Lower leg skin (tissue), 4 donors: ENCODE measurements at regions of chr5 and their contacts with region 1.

Region 1: GRCh38 chr5:79621042-79621441 is 8.8 kb downstream of the TENT2 start:
- DNase-seq: no peak
- H3K4me3 ChIP-seq: no peak overlapping the region
- CTCF ChIP-seq: no peak
- POLR2A ChIP-seq: no peak

Region 2: GRCh38 chr5:79581535-79581934 is 39.5 kb before region 1 on chr5:
- intact Hi-C with region 1: loop called (anchors 2 kb)
- DNase-seq: no peak
- H3K4me3 ChIP-seq: no peak overlapping the region
- CTCF ChIP-seq: no peak
- POLR2A ChIP-seq: no peak

Region 3: DNA sequence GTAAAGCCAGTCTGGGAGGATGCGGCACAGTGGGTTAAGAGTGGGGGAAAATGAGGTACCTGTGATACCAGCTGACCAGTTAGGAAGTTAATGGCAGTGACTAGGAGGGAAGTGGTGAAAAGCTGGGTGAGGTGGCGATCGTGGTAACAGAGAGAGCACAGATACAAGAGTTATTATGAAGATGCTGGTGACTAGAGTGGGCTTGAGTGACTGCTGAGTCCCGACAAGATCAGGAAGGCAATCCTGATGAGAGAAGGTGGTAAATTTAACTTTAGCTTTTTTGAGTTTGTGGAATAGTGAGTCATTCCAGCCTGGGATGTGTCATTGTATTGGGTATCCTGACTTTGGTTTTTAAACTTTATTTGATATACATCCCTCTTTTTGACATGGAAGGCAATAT is 107.4 kb after region 1 on chr5:
- intact Hi-C with region 1: no loop called
- DNase-seq: no peak
- H3K4me3 ChIP-seq: no peak overlapping the region
- CTCF ChIP-seq: no peak
- POLR2A ChIP-seq: no peak